ENCODE measurements at regions of chr3 and their contacts with region 1.

Region 1: GRCh38 chr3:25664810-25665314 is at the start of gene TOP2B:
- DNase-seq: peak; percentile 93
- H3K4me3 Mint-ChIP-seq: peak within 1 kb of the TSS; percentile 97
- H3K27ac Mint-ChIP-seq: peak within 1 kb of the TSS; percentile 98
- H3K4me1 Mint-ChIP-seq: peaks cover 34% of the 10 kb centered on the region
- H3K27me3 Mint-ChIP-seq: no peaks in the 10 kb centered on the region
- total RNA-seq, gene TOP2B: 167 and 170 TPM in 2 replicates

Region 2: GRCh38 chr3:23916886-23917678 is 1747.8 kb before region 1 on chr3 and contains the starts of genes NKIRAS1 and RPL15:
- intact Hi-C with region 1: loop called (anchors 2 kb)
- DNase-seq: peak; percentile 95
- H3K4me3 Mint-ChIP-seq: peak within 1 kb of the TSS; percentile 96
- H3K27ac Mint-ChIP-seq: peak within 1 kb of the TSS; percentile 92
- H3K4me1 Mint-ChIP-seq: peaks cover 45% of the 10 kb centered on the region
- H3K27me3 Mint-ChIP-seq: peaks cover 16% of the 10 kb centered on the region
- total RNA-seq, gene NKIRAS1: 2.3 TPM in 2 replicates
- total RNA-seq, gene RPL15: 1,859 and 1,865 TPM in 2 replicates

Region 3: DNA sequence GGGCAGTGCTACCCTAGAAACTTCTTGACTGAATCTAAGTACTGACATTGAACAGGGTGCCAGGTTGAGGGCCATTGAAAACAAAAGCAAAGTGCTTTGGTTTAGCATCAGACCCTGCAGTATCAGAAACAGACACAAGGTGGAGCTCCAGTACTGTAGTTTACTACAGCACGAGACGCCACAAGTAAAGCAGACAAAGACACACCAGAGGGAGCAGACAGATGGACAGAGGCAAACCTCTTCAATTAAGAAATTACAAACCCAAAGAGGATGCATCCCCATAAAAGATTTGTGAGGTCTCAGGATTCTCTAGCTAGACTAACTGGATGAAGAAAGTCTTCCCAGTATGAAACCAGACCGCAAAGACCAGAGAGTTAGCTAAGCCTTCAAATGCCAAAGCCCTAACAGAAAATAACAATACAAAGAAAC is 16.7 kb before region 1 on chr3:
- intact Hi-C with region 1: loop called (anchors 2 kb)
- DNase-seq: peak; percentile 65
- H3K4me3 Mint-ChIP-seq: no peak overlapping the region
- H3K27ac Mint-ChIP-seq: no peak overlapping the region
- H3K4me1 Mint-ChIP-seq: peaks cover 29% of the 10 kb centered on the region
- H3K27me3 Mint-ChIP-seq: no peaks in the 10 kb centered on the region

Region 4: GRCh38 chr3:25725813-25726210 is 61.0 kb after region 1 on chr3:
- intact Hi-C with region 1: loop called (anchors 5 kb)
- DNase-seq: no peak
- H3K4me3 Mint-ChIP-seq: no peak overlapping the region
- H3K27ac Mint-ChIP-seq: no peak overlapping the region
- H3K4me1 Mint-ChIP-seq: no peaks in the 10 kb centered on the region
- H3K27me3 Mint-ChIP-seq: no peaks in the 10 kb centered on the region

Region 5: GRCh38 chr3:25782938-25783660 is 118.2 kb after region 1 on chr3 and contains the start of gene NGLY1:
- intact Hi-C with region 1: loop called (anchors 1 kb)
- DNase-seq: peak; percentile 82
- H3K4me3 Mint-ChIP-seq: peak within 1 kb of the TSS; percentile 87
- H3K27ac Mint-ChIP-seq: peak within 1 kb of the TSS; percentile 83
- H3K4me1 Mint-ChIP-seq: peaks cover 54% of the 10 kb centered on the region
- H3K27me3 Mint-ChIP-seq: no peaks in the 10 kb centered on the region
- total RNA-seq, gene NGLY1: 71.6 and 78.8 TPM in 2 replicates

Region 6: DNA sequence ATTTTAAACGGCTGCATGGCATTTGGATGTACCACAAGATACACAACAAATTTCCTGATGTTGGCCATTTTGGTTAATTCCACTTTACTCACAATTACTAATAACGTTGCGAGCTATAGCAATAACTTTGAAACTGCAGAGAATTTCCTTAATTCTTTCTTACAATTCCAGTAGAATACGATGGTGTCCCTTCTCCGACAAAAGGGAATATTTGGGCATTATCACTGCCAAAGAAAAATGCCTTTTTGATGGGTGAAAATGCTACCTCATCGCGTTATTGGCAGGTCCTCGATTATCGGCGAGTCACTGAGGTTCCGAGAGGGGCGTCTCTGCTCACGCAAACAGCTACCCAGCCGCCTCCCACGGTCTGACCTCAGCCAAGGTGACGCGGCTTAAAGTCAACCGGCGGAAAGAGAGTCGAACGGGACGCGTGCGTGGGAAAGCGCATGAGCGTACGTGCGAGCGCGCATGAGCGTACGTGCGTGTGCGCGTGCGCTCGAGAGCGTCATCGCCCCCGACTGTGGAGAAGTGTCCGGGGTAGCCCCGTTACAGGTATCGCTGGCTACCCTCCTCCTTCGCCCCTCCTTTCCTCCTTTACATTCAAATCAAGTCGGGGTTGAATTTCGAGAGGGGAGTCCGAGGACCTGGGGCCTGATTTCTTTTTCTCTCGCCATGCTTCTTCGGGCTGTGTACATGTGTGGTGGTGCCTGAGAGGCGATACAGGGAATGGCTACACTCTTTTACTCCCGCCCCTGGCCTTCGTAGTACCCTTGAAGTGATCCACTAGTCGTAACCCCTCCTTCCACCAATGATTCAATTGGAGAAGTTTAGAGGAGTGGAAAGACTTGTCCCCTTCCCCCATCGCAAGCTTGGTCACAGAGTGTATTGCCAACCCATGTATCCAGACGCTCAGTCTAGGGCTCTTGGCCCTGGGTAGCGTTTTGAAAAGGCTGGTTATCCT is 125.0 kb after region 1 on chr3 and contains the start of gene OXSM:
- intact Hi-C with region 1: loop called (anchors 1 kb)
- DNase-seq: peak; percentile 89
- H3K4me3 Mint-ChIP-seq: peak within 1 kb of the TSS; percentile 92
- H3K27ac Mint-ChIP-seq: peak within 1 kb of the TSS; percentile 97
- H3K4me1 Mint-ChIP-seq: peaks cover 45% of the 10 kb centered on the region
- H3K27me3 Mint-ChIP-seq: no peaks in the 10 kb centered on the region
- total RNA-seq, gene OXSM: 15.7 and 15.8 TPM in 2 replicates

Region 7: GRCh38 chr3:25856902-25857518 is 192.1 kb after region 1 on chr3:
- intact Hi-C with region 1: loop called (anchors 5 kb)
- DNase-seq: no peak
- H3K4me3 Mint-ChIP-seq: no peak overlapping the region
- H3K27ac Mint-ChIP-seq: no peak overlapping the region
- H3K4me1 Mint-ChIP-seq: peaks cover 6% of the 10 kb centered on the region
- H3K27me3 Mint-ChIP-seq: no peaks in the 10 kb centered on the region

Region 8: GRCh38 chr3:25962249-25962648 is 297.4 kb after region 1 on chr3:
- intact Hi-C with region 1: no loop called
- DNase-seq: no peak
- H3K4me3 Mint-ChIP-seq: no peak overlapping the region
- H3K27ac Mint-ChIP-seq: no peak overlapping the region
- H3K4me1 Mint-ChIP-seq: no peaks in the 10 kb centered on the region
- H3K27me3 Mint-ChIP-seq: no peaks in the 10 kb centered on the region